ENCODE measurements at regions of chr1 and their contacts with region 1.

Region 1: GRCh38 chr1:222224636-222225315 is 323.1 kb downstream of the HHIPL2 start:
- DNase-seq: no peak
- ATAC-seq: no peak
- H3K4me3 ChIP-seq: no peak overlapping the region
- H3K4me3 Mint-ChIP-seq: no peak overlapping the region
- H3K27ac ChIP-seq: no peak overlapping the region
- H3K27ac Mint-ChIP-seq: no peak overlapping the region
- H3K4me1 ChIP-seq: no peaks in the 10 kb centered on the region
- H3K4me1 Mint-ChIP-seq: no peaks in the 10 kb centered on the region
- H3K27me3 ChIP-seq: no peaks in the 10 kb centered on the region
- H3K27me3 Mint-ChIP-seq: no peaks in the 10 kb centered on the region
- CTCF ChIP-seq: no peak

Region 2: GRCh38 chr1:222187566-222188332 is 37.0 kb before region 1 on chr1:
- CTCF ChIA-PET with region 1: no interaction called
- POLR2A ChIA-PET with region 1: no interaction called
- intact Hi-C with region 1: loop called in 1 of 2 experiments (anchors 5 kb)
- DNase-seq: no peak
- ATAC-seq: no peak
- H3K4me3 ChIP-seq: no peak overlapping the region
- H3K4me3 Mint-ChIP-seq: no peak overlapping the region
- H3K27ac ChIP-seq: no peak overlapping the region
- H3K27ac Mint-ChIP-seq: no peak overlapping the region
- H3K4me1 ChIP-seq: no peaks in the 10 kb centered on the region
- H3K4me1 Mint-ChIP-seq: no peaks in the 10 kb centered on the region
- H3K27me3 ChIP-seq: no peaks in the 10 kb centered on the region
- H3K27me3 Mint-ChIP-seq: no peaks in the 10 kb centered on the region
- CTCF ChIP-seq: no peak

Region 3: DNA sequence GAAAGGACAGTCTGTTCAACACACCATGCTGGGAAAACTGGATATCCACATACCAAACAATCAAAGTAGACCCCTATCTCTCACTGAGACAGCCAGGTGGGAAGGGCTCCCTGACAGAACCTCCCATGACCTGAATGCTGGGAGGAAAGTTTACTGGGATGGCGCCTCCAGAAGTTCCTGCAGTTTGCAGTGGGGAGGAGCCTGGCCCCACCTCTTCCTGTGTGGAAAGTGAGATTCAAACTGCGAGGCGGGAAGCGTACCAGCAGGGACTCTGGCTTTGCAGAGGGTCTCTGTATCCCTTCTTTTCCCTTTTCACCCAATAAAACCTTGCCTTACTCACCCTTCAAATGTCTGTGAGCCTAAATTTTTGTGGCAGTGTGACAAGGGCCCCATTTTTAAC is 132.5 kb after region 1 on chr1:
- CTCF ChIA-PET with region 1: no interaction called
- POLR2A ChIA-PET with region 1: no interaction called
- intact Hi-C with region 1: no loop called
- DNase-seq: no peak
- ATAC-seq: no peak
- H3K4me3 ChIP-seq: no peak overlapping the region
- H3K4me3 Mint-ChIP-seq: no peak overlapping the region
- H3K27ac ChIP-seq: no peak overlapping the region
- H3K27ac Mint-ChIP-seq: no peak overlapping the region
- H3K4me1 ChIP-seq: no peaks in the 10 kb centered on the region
- H3K4me1 Mint-ChIP-seq: no peaks in the 10 kb centered on the region
- H3K27me3 ChIP-seq: no peaks in the 10 kb centered on the region
- H3K27me3 Mint-ChIP-seq: no peaks in the 10 kb centered on the region
- CTCF ChIP-seq: no peak

Region 4: DNA sequence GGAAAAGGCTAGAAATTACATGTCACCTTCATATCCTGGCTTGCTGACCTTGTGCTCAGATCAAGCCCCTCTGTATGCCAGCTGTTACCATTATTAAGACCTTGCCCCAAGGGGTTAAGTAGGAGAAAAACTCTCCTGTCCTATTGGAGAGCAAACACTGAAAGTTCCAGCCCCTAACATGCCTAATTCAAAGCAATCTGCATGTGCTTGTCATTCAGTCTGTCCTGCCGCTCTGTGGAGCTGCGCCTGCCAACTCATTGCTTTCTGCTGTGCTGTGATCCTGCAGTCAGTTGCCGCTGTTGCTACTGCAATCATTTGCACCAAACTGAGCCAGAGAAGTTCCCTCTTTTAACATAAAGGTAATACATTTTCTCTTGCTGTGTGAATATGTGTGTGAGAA is 703.4 kb after region 1 on chr1:
- CTCF ChIA-PET with region 1: no interaction called
- POLR2A ChIA-PET with region 1: no interaction called
- intact Hi-C with region 1: no loop called
- DNase-seq: no peak
- ATAC-seq: no peak
- H3K4me3 ChIP-seq: no peak overlapping the region
- H3K4me3 Mint-ChIP-seq: no peak overlapping the region
- H3K27ac ChIP-seq: no peak overlapping the region
- H3K27ac Mint-ChIP-seq: no peak overlapping the region
- H3K4me1 ChIP-seq: no peaks in the 10 kb centered on the region
- H3K4me1 Mint-ChIP-seq: no peaks in the 10 kb centered on the region
- H3K27me3 ChIP-seq: no peaks in the 10 kb centered on the region
- H3K27me3 Mint-ChIP-seq: no peaks in the 10 kb centered on the region
- CTCF ChIP-seq: no peak

Measured in CD4-positive, alpha-beta T cell (primary cell).